ENCODE measurements at regions of chr22 and their contacts with region 1.

Region 1: DNA sequence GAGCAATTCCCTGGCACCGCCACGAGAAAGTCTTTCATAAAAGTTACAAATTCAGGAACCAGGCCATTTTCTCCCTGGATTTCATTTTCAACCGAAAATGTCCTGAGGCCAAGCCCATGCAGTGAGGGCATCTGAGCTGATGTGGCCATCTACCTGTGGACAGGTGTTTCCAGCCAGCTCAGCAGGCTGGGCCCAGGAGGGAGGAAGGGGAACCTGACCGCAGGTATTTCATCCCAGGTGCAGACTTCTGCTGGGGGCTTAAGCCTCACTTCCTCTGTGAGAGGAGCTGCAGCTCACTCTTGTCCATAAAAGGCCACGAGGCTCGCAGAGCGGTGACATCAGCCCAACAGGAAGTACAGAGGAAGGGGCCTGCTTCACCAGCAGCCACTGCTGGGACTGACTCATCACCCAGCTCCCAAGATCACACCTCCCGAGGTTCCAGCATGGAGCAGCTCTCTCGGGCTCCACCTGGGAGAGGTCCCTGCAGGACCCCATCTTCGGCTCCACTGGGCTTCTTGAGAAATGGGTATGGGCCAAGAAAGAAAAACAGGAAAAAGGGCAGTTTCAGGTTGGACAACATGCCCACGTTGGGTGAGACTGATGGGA is 56.4 kb downstream of the MYH9 start:
- DNase-seq: peak; percentile 90
- H3K4me3 Mint-ChIP-seq: peak overlapping the region; percentile 75
- H3K27ac Mint-ChIP-seq: peak overlapping the region; percentile 99
- H3K4me1 Mint-ChIP-seq: peaks cover 91% of the 10 kb centered on the region
- H3K27me3 Mint-ChIP-seq: no peaks in the 10 kb centered on the region

Region 2: DNA sequence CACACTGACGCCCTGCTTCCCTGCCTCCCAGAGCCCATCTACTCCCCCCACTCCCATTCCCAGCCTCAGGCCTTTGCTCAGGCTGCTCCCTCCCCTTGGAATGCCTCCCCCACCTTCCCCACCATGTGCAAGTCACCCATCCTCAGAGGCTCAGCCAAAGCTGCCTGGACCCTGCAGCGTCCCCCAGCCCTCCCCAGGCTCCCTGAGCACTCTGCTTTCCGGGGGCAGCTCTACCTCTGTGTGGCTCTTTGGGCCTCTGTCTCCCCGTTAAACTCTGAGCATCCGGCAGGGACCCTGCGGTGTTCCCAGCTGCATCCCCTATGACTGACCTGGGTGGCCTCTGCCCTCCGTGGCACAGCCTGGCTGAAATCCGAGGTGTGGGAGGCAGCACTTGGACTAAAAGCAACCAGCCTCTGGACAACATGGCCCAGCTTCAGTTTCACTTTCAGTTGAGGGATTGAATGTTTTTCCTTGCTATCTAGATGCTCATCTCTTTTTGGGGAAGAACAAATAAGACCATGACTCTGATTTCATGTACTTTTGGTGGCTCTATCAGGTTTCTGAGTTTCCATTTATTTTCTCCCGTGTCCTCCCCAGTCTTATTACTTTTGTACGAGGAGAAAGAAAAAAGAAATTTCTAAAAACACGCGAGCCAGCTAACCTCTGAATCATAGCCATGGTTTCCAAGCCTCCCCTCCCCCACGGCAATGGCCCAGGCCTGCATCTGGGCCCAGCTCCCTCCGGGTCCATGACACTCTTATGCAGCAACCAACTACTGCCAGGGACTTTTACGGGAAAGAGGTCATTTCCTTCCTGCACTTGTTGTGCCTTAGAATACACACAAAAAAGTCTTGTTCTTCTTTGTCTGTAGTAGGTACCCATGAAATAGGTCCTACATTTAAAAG is 174.6 kb before region 1 on chr22:
- CTCF ChIA-PET with region 1: no interaction called
- POLR2A ChIA-PET with region 1: interaction called, 3 read pairs
- intact Hi-C with region 1: loop called (anchors 5 kb)
- DNase-seq: peak; percentile 88
- H3K4me3 Mint-ChIP-seq: peak overlapping the region; percentile 90
- H3K27ac Mint-ChIP-seq: peak overlapping the region; percentile 96
- H3K4me1 Mint-ChIP-seq: peaks cover 92% of the 10 kb centered on the region
- H3K27me3 Mint-ChIP-seq: no peaks in the 10 kb centered on the region

Region 3: DNA sequence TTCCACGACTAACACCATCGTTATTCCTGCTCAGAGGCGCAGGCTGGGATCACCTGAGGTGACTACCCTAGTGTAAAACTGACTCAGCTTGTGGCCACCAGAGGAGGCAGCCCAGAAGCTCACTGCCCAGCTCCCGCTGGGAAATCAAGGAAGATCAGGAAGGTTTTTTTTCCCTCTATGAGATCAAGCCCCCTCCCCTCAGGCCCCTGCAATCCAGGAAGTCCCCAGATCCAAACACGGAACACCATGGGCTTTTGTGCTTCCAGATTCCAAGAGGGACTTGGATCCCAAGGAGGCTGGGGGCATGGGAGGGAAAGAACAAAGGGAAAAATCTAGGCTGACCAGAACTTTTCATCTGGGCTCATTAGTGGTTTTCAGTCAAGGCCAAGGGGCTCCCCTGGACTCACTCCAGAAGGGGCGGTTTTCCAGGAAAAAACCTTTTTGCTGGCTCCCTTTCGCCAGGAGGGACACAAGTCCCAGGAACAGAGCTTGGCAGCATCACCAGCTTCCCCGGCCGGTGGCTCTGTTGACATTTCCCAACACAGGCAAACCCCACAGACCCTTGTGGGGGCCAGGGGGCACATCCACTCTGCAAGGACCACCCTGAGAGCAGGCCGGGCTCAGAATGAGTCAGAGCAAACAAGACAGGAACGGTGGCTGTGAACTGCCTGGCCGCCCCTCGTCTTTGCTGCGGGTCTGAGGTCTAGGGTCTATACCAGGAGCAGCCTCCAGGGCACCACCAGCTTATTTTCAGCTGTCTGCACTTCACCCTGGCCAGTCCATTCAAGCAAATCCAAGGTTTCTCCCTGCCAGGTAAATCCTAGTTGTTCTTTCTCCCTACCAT is 19.6 kb after region 1 on chr22:
- CTCF ChIA-PET with region 1: interaction called, 12 read pairs
- POLR2A ChIA-PET with region 1: interaction called, 10 read pairs
- intact Hi-C with region 1: no loop called
- DNase-seq: no peak
- H3K4me3 Mint-ChIP-seq: no peak overlapping the region
- H3K27ac Mint-ChIP-seq: peak overlapping the region; percentile 94
- H3K4me1 Mint-ChIP-seq: peaks cover 88% of the 10 kb centered on the region
- H3K27me3 Mint-ChIP-seq: no peaks in the 10 kb centered on the region

Region 4: GRCh38 chr22:36365020-36365411 is 33.6 kb after region 1 on chr22:
- CTCF ChIA-PET with region 1: interaction called, 9 read pairs
- POLR2A ChIA-PET with region 1: interaction called, 28 read pairs
- intact Hi-C with region 1: loop called (anchors 2 kb)
- DNase-seq: peak; percentile 95
- H3K4me3 Mint-ChIP-seq: peak overlapping the region; percentile 60
- H3K27ac Mint-ChIP-seq: peak overlapping the region; percentile 85
- H3K4me1 Mint-ChIP-seq: peaks cover 95% of the 10 kb centered on the region
- H3K27me3 Mint-ChIP-seq: no peaks in the 10 kb centered on the region

Region 5: DNA sequence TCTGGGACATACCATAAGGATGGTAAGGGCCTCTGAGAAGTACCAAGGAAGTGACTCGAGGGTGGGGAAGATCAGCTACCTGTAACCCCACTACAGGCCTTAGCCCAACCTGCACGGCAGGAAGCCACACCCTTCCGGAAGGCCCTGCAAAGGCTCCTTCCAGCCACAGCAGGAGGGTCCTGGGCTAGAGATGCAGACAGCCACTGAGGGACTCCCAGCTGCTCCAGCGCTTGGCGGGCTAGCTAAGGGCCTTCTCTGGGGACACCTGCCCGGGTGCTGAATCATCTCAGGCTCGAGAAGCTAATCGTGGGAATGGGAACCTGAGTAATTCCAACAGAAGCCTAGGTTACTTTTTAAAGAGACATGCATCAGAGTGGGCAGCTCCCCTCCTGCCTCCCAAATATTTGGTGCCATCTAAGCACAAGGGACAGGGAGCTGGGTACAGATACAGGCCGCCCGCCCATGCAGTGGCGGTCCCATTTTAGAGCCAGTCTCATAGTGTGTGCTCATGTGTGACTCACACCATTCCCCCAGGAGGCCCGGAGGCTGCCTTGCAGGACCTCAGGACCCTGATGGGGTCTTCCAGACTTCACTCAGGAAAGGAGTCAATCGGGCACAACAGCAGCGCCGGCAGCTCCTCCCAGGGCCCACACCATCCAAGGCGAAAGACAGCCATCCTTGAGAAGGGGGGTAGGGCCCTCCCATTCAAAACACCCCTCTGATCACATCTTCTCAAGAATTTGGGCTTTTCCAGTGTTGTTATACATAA is 48.4 kb after region 1 on chr22:
- CTCF ChIA-PET with region 1: interaction called, 34 read pairs
- POLR2A ChIA-PET with region 1: interaction called, 39 read pairs
- intact Hi-C with region 1: no loop called
- DNase-seq: peak; percentile 59
- H3K4me3 Mint-ChIP-seq: peak overlapping the region; percentile 67
- H3K27ac Mint-ChIP-seq: peak overlapping the region; percentile 98
- H3K4me1 Mint-ChIP-seq: peaks cover 93% of the 10 kb centered on the region
- H3K27me3 Mint-ChIP-seq: no peaks in the 10 kb centered on the region

Region 6: GRCh38 chr22:36454916-36455570 is 123.6 kb after region 1 on chr22:
- CTCF ChIA-PET with region 1: interaction called, 3 read pairs
- POLR2A ChIA-PET with region 1: interaction called, 3 read pairs
- intact Hi-C with region 1: loop called (anchors 1 kb)
- DNase-seq: peak; percentile 97
- H3K4me3 Mint-ChIP-seq: peak overlapping the region; percentile 74
- H3K27ac Mint-ChIP-seq: peak overlapping the region; percentile 77
- H3K4me1 Mint-ChIP-seq: peaks cover 39% of the 10 kb centered on the region
- H3K27me3 Mint-ChIP-seq: no peaks in the 10 kb centered on the region

Region 7: DNA sequence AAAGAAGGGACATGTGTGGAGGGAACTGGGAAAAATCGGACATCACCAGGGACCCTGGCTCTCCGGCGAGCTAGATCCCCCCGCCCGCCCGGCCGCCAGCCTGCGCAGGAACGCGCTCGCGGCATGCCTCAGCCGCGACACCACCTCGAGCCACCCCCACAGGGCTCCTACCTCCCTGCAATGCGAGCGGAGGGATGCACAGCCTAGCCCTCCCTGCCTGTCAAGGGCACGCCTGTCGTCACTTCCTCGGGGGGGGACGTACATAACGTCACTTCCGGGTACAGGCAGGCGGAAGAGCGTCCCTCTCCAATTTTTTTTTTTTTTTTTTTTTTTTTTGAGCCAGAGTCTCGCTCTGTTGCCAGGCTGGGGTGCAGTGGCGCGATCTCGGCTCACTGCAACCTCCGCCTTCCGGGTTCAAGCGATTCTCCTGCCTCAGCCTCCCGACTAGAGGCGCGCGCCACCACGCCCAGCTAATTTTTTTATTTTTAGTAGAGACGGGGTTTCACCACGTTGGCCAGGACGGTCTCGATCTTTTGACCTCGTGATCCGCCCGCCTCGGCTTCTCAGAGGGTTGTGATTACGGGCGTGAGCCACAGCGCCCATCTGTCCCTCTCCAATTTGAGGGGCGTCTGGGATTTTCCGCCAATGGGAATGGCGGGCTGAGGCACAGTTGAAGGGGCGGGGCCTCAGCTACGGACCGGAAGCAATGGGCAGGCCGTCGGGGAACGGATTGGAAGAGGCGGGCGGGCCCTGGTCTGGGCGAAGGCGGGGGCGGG is 150.2 kb after region 1 on chr22 and contains the start of gene TXN2:
- CTCF ChIA-PET with region 1: interaction called, 3 read pairs
- POLR2A ChIA-PET with region 1: interaction called, 4 read pairs
- intact Hi-C with region 1: loop called (anchors 1 kb)
- DNase-seq: peak; percentile 96
- H3K4me3 Mint-ChIP-seq: peak within 1 kb of the TSS; percentile 100
- H3K27ac Mint-ChIP-seq: peak within 1 kb of the TSS; percentile 96
- H3K4me1 Mint-ChIP-seq: peaks cover 15% of the 10 kb centered on the region
- H3K27me3 Mint-ChIP-seq: no peaks in the 10 kb centered on the region
- total RNA-seq, gene TXN2: 94.3 to 97.0 TPM